ENCODE measurements at regions of chrX and their contacts with region 1.

Region 1: GRCh38 chrX:72121383-72121782 is 10.3 kb downstream of the RTL5 start:
- DNase-seq: peak; percentile 64
- H3K4me3 Mint-ChIP-seq: no peak overlapping the region
- H3K27ac Mint-ChIP-seq: peak overlapping the region; percentile 84
- H3K4me1 Mint-ChIP-seq: peaks cover 65% of the 10 kb centered on the region
- H3K27me3 Mint-ChIP-seq: peaks cover 7% of the 10 kb centered on the region

Region 2: GRCh38 chrX:72018277-72019112 is 102.9 kb before region 1 on chrX:
- CTCF ChIA-PET with region 1: interaction called, 95 read pairs
- POLR2A ChIA-PET with region 1: interaction called, 35 read pairs
- DNase-seq: peak; percentile 84
- H3K4me3 Mint-ChIP-seq: no peak overlapping the region
- H3K27ac Mint-ChIP-seq: no peak overlapping the region
- H3K4me1 Mint-ChIP-seq: peaks cover 31% of the 10 kb centered on the region
- H3K27me3 Mint-ChIP-seq: peaks cover 53% of the 10 kb centered on the region

Region 3: DNA sequence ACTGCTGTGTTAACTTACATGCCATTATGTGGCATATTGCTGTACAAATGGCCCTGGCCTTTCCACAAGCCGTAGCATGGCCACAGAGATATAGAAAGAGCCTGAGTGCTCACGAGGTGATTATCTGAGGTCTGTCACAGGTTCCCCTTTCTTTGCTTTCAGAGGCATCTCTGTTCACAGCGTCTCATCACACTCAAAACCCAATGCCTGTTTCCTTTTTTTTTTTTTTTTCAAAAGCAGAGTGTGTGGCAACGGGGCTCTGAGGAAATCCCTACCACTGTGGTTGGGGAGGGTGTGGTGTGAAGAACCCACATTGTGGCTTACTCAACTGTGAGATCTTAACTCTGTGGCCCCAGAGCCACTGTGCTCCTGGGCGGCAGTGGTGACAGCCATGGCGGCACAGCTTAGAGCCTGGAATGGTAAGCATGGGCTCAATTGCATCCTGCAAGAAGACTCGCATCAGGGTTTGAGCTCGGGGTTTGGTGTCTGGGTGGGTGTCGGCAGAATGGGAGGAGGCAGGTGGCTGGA is 20.5 kb before region 1 on chrX:
- CTCF ChIA-PET with region 1: interaction called, 20 read pairs
- POLR2A ChIA-PET with region 1: interaction called, 23 read pairs
- DNase-seq: peak; percentile 87
- H3K4me3 Mint-ChIP-seq: peak overlapping the region; percentile 83
- H3K27ac Mint-ChIP-seq: peak overlapping the region; percentile 90
- H3K4me1 Mint-ChIP-seq: peaks cover 60% of the 10 kb centered on the region
- H3K27me3 Mint-ChIP-seq: peaks cover 20% of the 10 kb centered on the region

Region 4: DNA sequence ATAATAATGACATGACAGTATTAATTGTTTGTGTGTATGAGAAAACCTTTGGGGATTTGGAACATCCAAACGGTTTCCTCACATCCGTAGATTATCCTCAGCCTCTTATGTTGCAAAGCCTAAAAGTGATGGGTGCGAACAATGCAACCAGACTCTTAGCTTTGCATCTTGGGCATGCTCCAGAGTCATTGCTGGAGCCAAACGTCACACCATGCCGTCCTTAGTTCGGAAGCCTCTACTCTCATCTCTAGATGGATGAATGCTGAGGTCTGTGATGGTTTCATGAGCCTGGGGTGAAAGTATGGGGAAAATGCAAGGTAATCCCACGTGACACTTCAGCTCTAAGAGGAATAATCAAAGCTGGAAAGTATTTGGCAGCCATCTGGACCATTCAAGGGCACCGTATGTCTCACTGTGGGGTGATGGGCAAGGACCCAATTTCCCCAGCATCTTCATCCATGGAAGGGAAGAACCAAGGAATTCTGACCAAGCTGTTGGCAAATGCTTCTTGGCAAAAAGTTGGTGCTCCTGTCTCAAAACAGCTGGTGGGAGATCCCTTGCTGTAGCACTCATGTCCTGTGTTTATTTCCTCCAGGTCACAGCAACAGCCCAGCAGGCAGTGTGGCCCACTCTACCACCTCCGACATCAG is 16.6 kb after region 1 on chrX:
- CTCF ChIA-PET with region 1: no interaction called
- POLR2A ChIA-PET with region 1: no interaction called
- DNase-seq: no peak
- H3K4me3 Mint-ChIP-seq: no peak overlapping the region
- H3K27ac Mint-ChIP-seq: no peak overlapping the region
- H3K4me1 Mint-ChIP-seq: peaks cover 22% of the 10 kb centered on the region
- H3K27me3 Mint-ChIP-seq: peaks cover 43% of the 10 kb centered on the region